A549 (cell line): ENCODE measurements at regions of chr15 and their contacts with region 1.

Region 1: DNA sequence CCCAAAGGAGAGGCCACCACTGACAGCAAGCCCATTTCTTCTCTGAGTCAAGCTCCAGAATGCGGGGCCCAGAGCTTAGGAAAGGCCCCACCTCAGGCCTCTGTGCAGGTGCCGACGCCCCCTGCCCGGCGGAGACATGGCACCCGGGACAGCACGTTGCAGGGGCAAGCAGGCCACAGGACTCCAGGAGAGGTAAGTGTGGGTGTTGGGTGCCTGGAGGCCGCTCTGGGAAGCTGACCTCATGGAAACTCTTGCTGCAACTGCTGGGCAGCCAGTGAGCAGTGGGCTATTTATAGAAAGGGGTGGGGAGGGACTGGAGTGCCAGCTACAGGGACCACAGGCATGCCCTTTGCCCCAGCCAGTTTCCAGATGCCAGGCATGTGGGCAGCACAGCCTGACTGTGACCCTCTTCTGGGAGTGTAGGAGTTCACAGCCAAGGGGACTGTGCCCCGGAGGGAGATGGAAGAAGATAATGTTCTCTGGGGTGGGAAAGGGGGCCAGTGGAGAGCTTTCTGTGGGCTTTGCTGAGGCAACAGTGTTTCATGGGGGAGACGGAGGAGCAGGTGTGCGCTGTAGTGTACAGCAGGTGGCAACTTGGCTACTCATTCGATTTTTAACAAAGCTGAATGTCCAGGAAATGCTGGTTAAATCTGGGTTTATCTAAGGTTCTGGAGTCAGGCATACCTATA is 23.7 kb downstream of the ALPK3 start:
- DNase-seq: peak in 1 of 2 experiments; percentile 73
- ATAC-seq: peak; percentile 78 to 80
- H3K4me3 ChIP-seq: no peak overlapping the region
- H3K27ac ChIP-seq: peak overlapping the region; percentile 31 to 77; a peak in 5 of 6 replicates
- H3K4me1 ChIP-seq: peaks cover 20% of the 10 kb centered on the region
- CTCF ChIP-seq: no peak
- EP300 ChIP-seq: no peak
- POLR2A ChIP-seq: no peak
- RAD21 ChIP-seq: no peak

Region 2: GRCh38 chr15:84904419-84904818 is 63.5 kb after region 1 on chr15:
- CTCF ChIA-PET with region 1: no interaction called
- POLR2A ChIA-PET with region 1: no interaction called
- DNase-seq: no peak
- ATAC-seq: no peak
- H3K4me3 ChIP-seq: no peak overlapping the region
- H3K27ac ChIP-seq: peak overlapping the region; percentile 3 to 71; a peak in 5 of 6 replicates
- H3K4me1 ChIP-seq: peaks cover 33% of the 10 kb centered on the region
- CTCF ChIP-seq: no peak
- EP300 ChIP-seq: no peak
- POLR2A ChIP-seq: no peak
- RAD21 ChIP-seq: no peak

Region 3: DNA sequence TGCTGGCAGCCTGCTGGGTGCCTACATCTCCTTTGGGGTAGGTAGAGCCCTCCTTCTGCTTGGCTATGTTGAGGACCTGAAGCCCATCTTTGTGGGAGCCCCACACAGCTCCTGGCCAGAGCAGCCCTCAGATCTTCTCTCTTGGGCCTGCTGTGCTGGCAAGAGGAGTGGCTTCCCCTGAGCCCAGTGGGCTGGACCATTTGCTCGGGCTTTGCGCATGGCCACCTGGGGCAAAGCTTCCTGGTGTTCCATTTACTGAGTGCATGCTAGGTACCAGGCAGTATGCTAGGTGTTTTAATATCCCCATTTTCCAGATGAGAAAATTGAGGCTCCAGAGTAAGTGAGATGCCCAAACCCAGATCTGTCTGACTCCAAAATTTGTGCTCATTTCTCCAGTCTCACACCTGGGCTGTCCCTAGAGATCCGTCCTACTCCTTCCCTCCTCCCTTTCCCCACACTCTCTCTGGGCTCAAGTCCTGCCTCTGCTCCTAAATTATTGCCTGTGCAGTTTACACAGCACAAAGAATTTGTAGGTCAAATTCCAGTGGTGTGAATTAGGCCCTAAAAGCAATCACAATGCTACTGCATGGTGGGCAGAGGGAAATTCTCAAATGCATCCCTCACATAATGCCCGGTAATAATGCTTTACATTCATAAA is 83.3 kb after region 1 on chr15:
- CTCF ChIA-PET with region 1: interaction called, 18 read pairs
- POLR2A ChIA-PET with region 1: no interaction called
- DNase-seq: no peak
- ATAC-seq: no peak
- H3K4me3 ChIP-seq: no peak overlapping the region
- H3K27ac ChIP-seq: peak overlapping the region; percentile 45 to 78
- H3K4me1 ChIP-seq: peaks cover 47% of the 10 kb centered on the region
- CTCF ChIP-seq: no peak
- EP300 ChIP-seq: no peak
- POLR2A ChIP-seq: no peak
- RAD21 ChIP-seq: no peak